ENCODE measurements at regions of chr1 and their contacts with region 1.

Region 1: GRCh38 chr1:156892190-156893047 is 1.1 kb upstream of the PEAR1 start:
- DNase-seq: peak; percentile 88
- H3K4me3 Mint-ChIP-seq: peak overlapping the region; percentile 56
- H3K27ac Mint-ChIP-seq: no peak overlapping the region
- H3K4me1 Mint-ChIP-seq: peaks cover 26% of the 10 kb centered on the region
- H3K27me3 Mint-ChIP-seq: peaks cover 18% of the 10 kb centered on the region
- CTCF ChIP-seq: peak; percentile 94

Region 2: GRCh38 chr1:156705918-156706656 is 186.3 kb before region 1 on chr1:
- CTCF ChIA-PET with region 1: interaction called, 13 read pairs
- POLR2A ChIA-PET with region 1: interaction called, 3 read pairs
- intact Hi-C with region 1: no loop called
- DNase-seq: peak; percentile 57
- H3K4me3 Mint-ChIP-seq: peak overlapping the region; percentile 30
- H3K27ac Mint-ChIP-seq: no peak overlapping the region
- H3K4me1 Mint-ChIP-seq: peaks cover 38% of the 10 kb centered on the region
- H3K27me3 Mint-ChIP-seq: no peaks in the 10 kb centered on the region
- CTCF ChIP-seq: peak; percentile 99

Region 3: GRCh38 chr1:156797212-156797871 is 95.1 kb before region 1 on chr1:
- CTCF ChIA-PET with region 1: interaction called, 237 read pairs
- POLR2A ChIA-PET with region 1: interaction called, 4 read pairs
- intact Hi-C with region 1: loop called (anchors 1 kb)
- DNase-seq: peak; percentile 82
- H3K4me3 Mint-ChIP-seq: no peak overlapping the region
- H3K27ac Mint-ChIP-seq: no peak overlapping the region
- H3K4me1 Mint-ChIP-seq: no peaks in the 10 kb centered on the region
- H3K27me3 Mint-ChIP-seq: no peaks in the 10 kb centered on the region
- CTCF ChIP-seq: peak; percentile 93

Region 4: DNA sequence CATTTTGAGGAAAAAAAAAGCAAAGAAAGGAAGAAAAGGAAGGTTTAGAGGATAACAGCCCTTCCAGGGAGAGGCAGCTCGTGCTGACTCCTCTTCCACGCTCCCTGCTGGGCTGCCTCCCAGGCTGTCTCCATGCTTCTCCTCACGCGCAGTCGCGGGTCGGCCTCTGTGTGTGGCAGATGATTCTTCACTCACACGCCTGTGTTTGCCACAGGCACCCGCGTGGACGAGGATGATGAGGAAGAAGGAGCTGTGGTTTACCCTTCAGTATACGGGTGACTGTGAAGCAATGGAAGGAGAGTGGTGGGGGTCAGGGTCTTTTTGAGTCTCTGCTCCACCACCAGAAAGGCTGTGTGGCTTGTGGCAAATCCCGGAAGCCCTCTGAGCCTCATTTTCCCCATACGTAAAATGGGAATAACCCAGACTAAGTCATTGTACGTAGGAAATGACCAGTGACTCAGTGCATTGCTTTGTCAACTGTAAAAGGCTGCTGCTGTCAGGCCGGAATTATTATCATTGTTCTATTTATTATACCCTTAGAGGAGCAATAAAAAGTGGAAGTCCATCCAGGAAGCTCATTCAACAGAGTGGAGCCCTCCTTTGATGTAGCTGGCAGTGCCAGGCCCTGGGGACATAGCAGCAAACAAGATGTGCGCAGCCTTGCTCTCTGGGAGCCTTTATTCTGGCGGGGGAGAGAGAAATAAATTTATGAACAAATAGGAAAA is 63.9 kb before region 1 on chr1:
- CTCF ChIA-PET with region 1: interaction called, 55 read pairs
- POLR2A ChIA-PET with region 1: no interaction called
- intact Hi-C with region 1: no loop called
- DNase-seq: no peak
- H3K4me3 Mint-ChIP-seq: no peak overlapping the region
- H3K27ac Mint-ChIP-seq: no peak overlapping the region
- H3K4me1 Mint-ChIP-seq: no peaks in the 10 kb centered on the region
- H3K27me3 Mint-ChIP-seq: peaks cover 24% of the 10 kb centered on the region
- CTCF ChIP-seq: no peak

Region 5: GRCh38 chr1:156852418-156852874 is 40.0 kb before region 1 on chr1:
- CTCF ChIA-PET with region 1: interaction called, 163 read pairs
- POLR2A ChIA-PET with region 1: no interaction called
- intact Hi-C with region 1: no loop called
- DNase-seq: peak; percentile 85
- H3K4me3 Mint-ChIP-seq: no peak overlapping the region
- H3K27ac Mint-ChIP-seq: no peak overlapping the region
- H3K4me1 Mint-ChIP-seq: peaks cover 13% of the 10 kb centered on the region
- H3K27me3 Mint-ChIP-seq: peaks cover 17% of the 10 kb centered on the region
- CTCF ChIP-seq: no peak

Region 6: DNA sequence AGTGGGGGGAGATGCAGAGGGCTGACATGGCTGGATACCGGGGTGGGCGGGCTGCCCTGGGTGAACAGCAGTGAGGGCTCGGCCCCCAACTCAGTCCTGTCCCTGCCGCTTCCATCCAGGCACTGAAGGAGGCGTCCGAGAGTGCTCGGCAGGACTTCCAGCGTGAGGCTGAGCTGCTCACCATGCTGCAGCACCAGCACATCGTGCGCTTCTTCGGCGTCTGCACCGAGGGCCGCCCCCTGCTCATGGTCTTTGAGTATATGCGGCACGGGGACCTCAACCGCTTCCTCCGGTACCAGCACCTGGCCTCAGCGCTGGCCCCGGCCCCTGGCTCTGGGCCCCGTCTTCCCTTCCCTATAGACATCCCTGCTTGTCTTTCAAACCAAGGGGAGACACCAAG is 16.1 kb before region 1 on chr1:
- CTCF ChIA-PET with region 1: interaction called, 114 read pairs
- POLR2A ChIA-PET with region 1: interaction called, 3 read pairs
- intact Hi-C with region 1: no loop called
- DNase-seq: no peak
- H3K4me3 Mint-ChIP-seq: no peak overlapping the region
- H3K27ac Mint-ChIP-seq: no peak overlapping the region
- H3K4me1 Mint-ChIP-seq: no peaks in the 10 kb centered on the region
- H3K27me3 Mint-ChIP-seq: peaks cover 38% of the 10 kb centered on the region
- CTCF ChIP-seq: no peak

Region 7: DNA sequence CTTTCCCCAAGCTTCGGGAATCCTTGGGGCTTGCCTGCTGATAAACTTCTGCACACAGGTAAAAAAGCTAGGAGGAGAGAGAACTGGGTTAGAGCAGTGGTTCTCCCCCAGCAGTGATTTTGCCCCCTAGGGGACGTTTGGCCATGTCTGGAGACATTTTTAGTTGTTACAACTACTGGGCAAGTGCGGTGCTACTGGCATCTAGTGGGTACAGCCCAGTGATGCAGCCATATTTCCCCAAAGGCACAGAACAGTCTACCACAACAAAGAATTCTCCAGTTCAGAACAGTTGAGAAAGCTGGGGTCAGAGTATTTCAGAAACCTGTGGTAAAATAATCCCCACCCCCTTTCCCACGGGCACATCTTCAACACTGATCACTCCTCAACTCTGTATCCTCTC is 69.3 kb after region 1 on chr1:
- CTCF ChIA-PET with region 1: interaction called, 15 read pairs
- POLR2A ChIA-PET with region 1: no interaction called
- intact Hi-C with region 1: no loop called
- DNase-seq: no peak
- H3K4me3 Mint-ChIP-seq: no peak overlapping the region
- H3K27ac Mint-ChIP-seq: peak overlapping the region; percentile 28
- H3K4me1 Mint-ChIP-seq: peaks cover 11% of the 10 kb centered on the region
- H3K27me3 Mint-ChIP-seq: no peaks in the 10 kb centered on the region
- CTCF ChIP-seq: no peak

Region 8: DNA sequence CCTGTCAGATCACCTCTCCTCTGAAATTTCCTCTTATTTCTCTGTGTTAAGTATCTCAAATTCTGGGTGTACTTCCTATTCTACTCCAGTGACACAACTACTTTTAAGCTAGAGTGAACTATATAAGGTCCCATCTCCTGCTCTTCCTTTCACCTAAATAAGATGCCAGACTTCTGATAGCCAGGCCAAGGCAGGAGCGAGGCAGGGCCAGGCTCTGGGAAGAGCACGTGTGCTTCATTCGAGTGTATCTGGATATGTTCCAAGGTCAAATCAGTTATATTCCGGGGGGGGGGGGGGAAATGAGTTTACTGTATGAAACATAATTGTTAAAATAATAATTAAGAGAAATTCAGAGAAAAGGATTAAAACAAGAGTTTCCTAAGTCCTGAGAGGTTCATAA is 88.1 kb after region 1 on chr1:
- CTCF ChIA-PET with region 1: no interaction called
- POLR2A ChIA-PET with region 1: no interaction called
- intact Hi-C with region 1: no loop called
- DNase-seq: no peak
- H3K4me3 Mint-ChIP-seq: no peak overlapping the region
- H3K27ac Mint-ChIP-seq: no peak overlapping the region
- H3K4me1 Mint-ChIP-seq: no peaks in the 10 kb centered on the region
- H3K27me3 Mint-ChIP-seq: no peaks in the 10 kb centered on the region
- CTCF ChIP-seq: no peak

Measured in MCF 10A (cell line).